G401 (cell line): ENCODE measurements at regions of chr6 and their contacts with region 1.

Region 1: GRCh38 chr6:32181915-32182529 is 2.0 kb downstream of the AGER start:
- DNase-seq: no peak

Region 2: GRCh38 chr6:32127717-32128592 is 54.1 kb before region 1 on chr6 and contains the start of gene ATF6B:
- in situ Hi-C with region 1: loop called (anchors 5 kb)
- DNase-seq: peak; percentile 100
- total RNA-seq, gene ATF6B: 21.1 and 23.1 TPM in 2 replicates